PC-9 (cell line): ENCODE measurements at regions of chr5 and their contacts with region 1.

Region 1: DNA sequence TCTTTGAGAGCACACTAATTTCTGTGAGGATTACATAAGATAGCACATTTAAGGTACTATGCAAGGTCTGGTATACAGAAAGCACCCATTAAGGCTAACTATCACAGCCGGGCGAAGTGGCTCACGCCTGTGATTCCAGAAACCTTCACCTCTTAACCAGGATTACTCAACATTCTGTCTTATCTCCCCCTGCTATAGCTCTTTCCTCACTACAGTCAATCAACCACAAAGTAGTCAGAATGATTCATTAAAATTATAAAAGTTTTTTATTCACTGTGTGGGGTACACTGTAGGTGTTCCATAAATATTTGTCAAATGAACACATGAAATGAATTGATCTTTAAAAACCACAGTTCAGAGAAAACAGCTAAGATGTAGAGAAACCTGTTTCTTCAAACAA is 48.7 kb downstream of the CHD1 start:
- DNase-seq: peak in 1 of 2 experiments; percentile 93
- H3K4me3 ChIP-seq: peak overlapping the region; percentile 10; the same call in 1 of the 2 replicates
- H3K27ac ChIP-seq: peak overlapping the region; percentile 83
- H3K4me1 ChIP-seq: peaks cover 41% of the 10 kb centered on the region
- H3K27me3 ChIP-seq: no peaks in the 10 kb centered on the region
- CTCF ChIP-seq: no peak

Region 2: DNA sequence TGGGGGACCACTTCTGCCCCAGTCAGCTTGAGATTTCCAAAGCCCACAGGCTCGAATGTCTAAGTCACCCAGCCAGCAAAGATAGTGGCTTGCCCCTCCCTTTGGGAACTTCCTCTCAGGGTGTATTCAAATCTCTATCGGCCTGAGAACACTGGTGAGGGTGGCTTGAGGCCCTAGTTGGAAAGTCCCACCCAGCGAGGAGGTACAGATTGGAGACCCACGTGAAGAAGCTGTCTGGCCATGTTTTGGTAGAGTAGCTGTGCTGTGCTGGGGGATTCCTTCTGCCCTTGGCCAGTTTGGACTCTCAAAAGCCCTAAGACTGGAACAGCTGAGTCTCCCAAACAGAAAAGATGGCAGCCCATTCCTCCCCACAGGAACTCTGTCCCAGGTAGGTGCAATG is 1524.4 kb before region 1 on chr5:
- CTCF ChIA-PET with region 1: no interaction called
- POLR2A ChIA-PET with region 1: no interaction called
- intact Hi-C with region 1: no loop called
- DNase-seq: no peak
- H3K4me3 ChIP-seq: no peak overlapping the region
- H3K27ac ChIP-seq: no peak overlapping the region
- H3K4me1 ChIP-seq: no peaks in the 10 kb centered on the region
- H3K27me3 ChIP-seq: no peaks in the 10 kb centered on the region
- CTCF ChIP-seq: no peak

Region 3: GRCh38 chr5:98624145-98624880 is 255.8 kb before region 1 on chr5:
- CTCF ChIA-PET with region 1: no interaction called
- POLR2A ChIA-PET with region 1: no interaction called
- intact Hi-C with region 1: no loop called
- DNase-seq: no peak
- H3K4me3 ChIP-seq: no peak overlapping the region
- H3K27ac ChIP-seq: no peak overlapping the region
- H3K4me1 ChIP-seq: no peaks in the 10 kb centered on the region
- H3K27me3 ChIP-seq: no peaks in the 10 kb centered on the region
- CTCF ChIP-seq: no peak

Region 4: DNA sequence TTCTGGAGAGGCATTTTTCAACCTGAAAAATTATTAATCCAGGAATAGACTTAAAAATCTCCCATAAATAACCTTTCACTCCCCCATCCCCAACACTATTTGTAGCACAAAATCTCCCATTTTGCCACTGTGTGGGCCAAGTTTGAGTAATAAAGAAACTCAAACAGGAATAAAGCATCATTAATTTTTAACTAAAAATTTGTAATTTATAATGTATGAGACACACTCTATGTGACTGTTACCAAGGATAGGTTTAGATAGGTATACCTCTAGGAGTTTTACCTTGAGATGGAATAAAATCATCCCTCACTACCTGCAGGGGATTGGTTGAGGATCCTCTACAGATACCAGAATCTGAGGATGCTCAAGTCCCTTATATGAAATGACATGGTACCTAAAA is 18.6 kb after region 1 on chr5:
- CTCF ChIA-PET with region 1: no interaction called
- POLR2A ChIA-PET with region 1: no interaction called
- intact Hi-C with region 1: loop called (anchors 2 kb)
- DNase-seq: no peak
- H3K4me3 ChIP-seq: no peak overlapping the region
- H3K27ac ChIP-seq: no peak overlapping the region
- H3K4me1 ChIP-seq: no peaks in the 10 kb centered on the region
- H3K27me3 ChIP-seq: no peaks in the 10 kb centered on the region
- CTCF ChIP-seq: no peak